Panc1 (cell line): ENCODE measurements at regions of chr10 and their contacts with region 1.

Region 1: GRCh38 chr10:89217057-89217990 is 10.2 kb upstream of the CH25H start:
- DNase-seq: peak; percentile 32
- ATAC-seq: 0 out of 2 replicates have a peak, but pooled peaks have one; percentile 61
- H3K4me3 ChIP-seq: no peak overlapping the region
- H3K27ac ChIP-seq: no peak overlapping the region
- H3K4me1 ChIP-seq: peaks cover 2% of the 10 kb centered on the region; the same call in 1 of the 2 replicates
- H3K27me3 ChIP-seq: no peaks in the 10 kb centered on the region
- CTCF ChIP-seq: peak; percentile 71; the same call in 1 of the 2 replicates

Region 2: DNA sequence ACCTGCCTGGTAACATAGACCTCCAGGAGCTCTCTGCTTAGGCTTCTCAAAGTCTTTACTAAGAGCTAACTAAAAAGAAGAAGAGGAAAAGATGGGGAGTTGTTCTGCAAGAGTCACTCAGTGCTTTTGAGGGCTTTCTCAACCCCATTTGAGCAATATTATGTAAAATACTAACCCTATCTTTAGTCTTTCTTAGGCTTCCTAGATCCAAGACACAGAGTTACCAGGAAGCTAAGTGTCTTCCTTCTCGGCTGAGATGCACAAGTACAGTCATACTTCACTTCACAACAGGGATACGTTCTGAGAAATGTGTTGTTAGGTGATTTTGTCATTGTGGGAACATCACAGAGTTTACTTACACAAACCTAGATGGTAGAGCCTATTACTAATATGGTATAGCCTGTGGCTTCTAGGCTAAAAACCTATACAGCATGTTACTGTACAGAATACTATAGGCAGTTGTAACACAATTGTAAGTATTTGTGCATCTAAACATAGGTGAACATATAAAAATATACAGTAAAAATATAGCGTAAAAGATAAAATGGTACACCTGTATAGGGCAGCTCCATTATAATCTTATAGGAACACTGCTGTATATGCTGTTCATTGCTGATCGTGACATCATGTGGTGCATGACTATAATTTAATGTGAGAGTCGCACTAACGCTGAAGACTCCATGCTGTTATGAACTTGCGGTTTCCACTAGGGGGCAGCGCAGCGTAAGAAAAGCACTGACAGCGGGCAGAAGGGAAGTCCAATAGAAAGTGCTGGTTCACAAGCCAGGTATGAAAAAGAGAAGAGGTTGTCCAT is 382.0 kb before region 1 on chr10:
- CTCF ChIA-PET with region 1: no interaction called
- POLR2A ChIA-PET with region 1: no interaction called
- in situ Hi-C with region 1: no loop called
- intact Hi-C with region 1: loop called (anchors 10 kb)
- DNase-seq: peak; percentile 86
- ATAC-seq: peak; percentile 99
- H3K4me3 ChIP-seq: no peak overlapping the region
- H3K27ac ChIP-seq: 0 out of 2 replicates have a peak overlapping the region, but pooled peaks have one; percentile 8
- H3K4me1 ChIP-seq: peaks cover 3% of the 10 kb centered on the region; the same call in 1 of the 2 replicates
- H3K27me3 ChIP-seq: 0 out of 2 replicates have a peak, but pooled peaks cover 2% of the 10 kb centered on the region
- CTCF ChIP-seq: peak; percentile 94

Region 3: DNA sequence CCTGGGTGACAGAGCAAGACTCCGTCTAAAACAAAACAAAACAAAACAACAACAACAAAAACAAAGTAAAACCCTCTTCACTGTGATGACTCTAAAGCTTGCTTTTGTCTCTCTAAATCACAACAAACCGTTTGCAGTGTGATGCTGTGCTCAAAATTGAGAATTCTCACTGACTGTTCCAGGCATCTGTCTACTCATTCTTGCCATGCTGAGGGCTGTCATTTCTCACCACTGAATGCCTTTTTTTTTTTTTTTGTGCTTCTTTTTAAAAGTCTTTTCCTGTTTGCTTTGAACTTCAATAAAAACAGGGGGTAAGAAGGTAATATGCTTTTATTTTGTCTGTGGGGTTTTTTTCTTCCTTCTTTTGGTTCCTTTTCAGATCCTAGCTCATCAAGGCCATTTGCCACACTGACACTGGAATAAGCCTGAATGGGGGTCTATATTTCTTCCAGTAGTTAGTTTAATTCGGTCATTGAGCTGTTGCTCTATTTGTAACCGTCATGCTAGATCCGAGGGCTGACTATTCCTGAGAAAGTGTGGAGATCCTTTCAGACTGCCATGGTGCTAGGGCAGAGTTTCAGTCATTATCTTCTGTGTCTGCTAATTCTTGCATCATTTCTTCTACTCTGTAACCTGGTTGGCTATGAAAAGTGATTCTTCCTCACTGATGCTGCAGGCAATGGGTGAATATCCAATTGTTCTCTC is 216.1 kb before region 1 on chr10:
- CTCF ChIA-PET with region 1: interaction called, 3 read pairs
- POLR2A ChIA-PET with region 1: no interaction called
- in situ Hi-C with region 1: loop called (anchors 25 kb)
- intact Hi-C with region 1: no loop called
- DNase-seq: no peak
- ATAC-seq: no peak
- H3K4me3 ChIP-seq: 0 out of 4 replicates have a peak overlapping the region, but pooled peaks of 1 of the 2 experiments have one; percentile 10
- H3K27ac ChIP-seq: no peak overlapping the region
- H3K4me1 ChIP-seq: no peaks in the 10 kb centered on the region
- H3K27me3 ChIP-seq: no peaks in the 10 kb centered on the region
- CTCF ChIP-seq: no peak

Region 4: GRCh38 chr10:89029785-89030437 is 187.4 kb before region 1 on chr10:
- CTCF ChIA-PET with region 1: interaction called, 8 read pairs
- POLR2A ChIA-PET with region 1: no interaction called
- in situ Hi-C with region 1: no loop called
- intact Hi-C with region 1: loop called (anchors 1 kb)
- DNase-seq: peak; percentile 59
- ATAC-seq: peak; percentile 65
- H3K4me3 ChIP-seq: peak overlapping the region in 1 of 2 experiments; percentile 31; a peak in 1 of 4 replicates
- H3K27ac ChIP-seq: no peak overlapping the region
- H3K4me1 ChIP-seq: peaks cover 6% of the 10 kb centered on the region; the same call in 1 of the 2 replicates
- H3K27me3 ChIP-seq: no peaks in the 10 kb centered on the region
- CTCF ChIP-seq: peak; percentile 92

Region 5: DNA sequence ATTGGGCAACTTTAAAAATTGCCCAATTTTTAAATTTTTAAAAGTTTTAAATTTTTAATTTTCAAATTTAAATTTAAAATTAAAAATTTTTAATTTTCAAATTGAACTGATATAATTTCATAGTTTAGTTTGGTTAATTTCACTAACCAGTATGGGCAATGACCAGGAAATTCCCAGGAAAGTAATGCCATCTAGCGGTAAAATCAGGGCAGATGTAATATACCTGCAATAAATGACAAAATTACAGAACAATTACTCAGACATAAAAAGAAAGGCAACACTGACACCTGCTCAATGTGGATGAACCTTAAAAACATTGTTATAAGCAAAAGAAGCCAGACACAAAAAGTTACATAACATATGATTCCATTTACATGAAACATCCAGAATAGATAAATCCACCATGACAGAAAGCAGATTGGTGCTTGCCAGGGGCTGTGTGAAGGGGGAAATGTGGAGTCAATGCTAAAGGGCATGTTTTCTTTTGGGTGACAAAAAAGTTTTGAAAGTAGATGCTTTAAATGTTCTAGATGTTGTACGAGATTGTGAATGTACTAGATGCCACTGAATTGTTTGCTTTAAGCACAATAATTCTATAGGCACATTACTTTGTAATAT is 346.6 kb after region 1 on chr10:
- CTCF ChIA-PET with region 1: no interaction called
- POLR2A ChIA-PET with region 1: no interaction called
- in situ Hi-C with region 1: no loop called
- intact Hi-C with region 1: loop called (anchors 5 kb)
- DNase-seq: peak; percentile 48
- ATAC-seq: peak; percentile 88
- H3K4me3 ChIP-seq: no peak overlapping the region
- H3K27ac ChIP-seq: no peak overlapping the region
- H3K4me1 ChIP-seq: no peaks in the 10 kb centered on the region
- H3K27me3 ChIP-seq: no peaks in the 10 kb centered on the region; the same call in 1 of the 2 replicates
- CTCF ChIP-seq: peak; percentile 78; the same call in 1 of the 2 replicates